Activated CD4-positive, alpha-beta T cell treated with anti-CD3 and anti-CD28 coated beads for 36 hours (primary cell): ENCODE measurements at regions of chr19 and their contacts with region 1.

Region 1: GRCh38 chr19:50933640-50934039 is 19.2 kb downstream of the KLK5 start:
- DNase-seq: no peak
- ATAC-seq: no peak
- H3K4me3 Mint-ChIP-seq: no peak overlapping the region
- H3K27ac Mint-ChIP-seq: no peak overlapping the region
- H3K4me1 Mint-ChIP-seq: no peaks in the 10 kb centered on the region
- H3K27me3 Mint-ChIP-seq: peaks cover 30% of the 10 kb centered on the region

Region 2: DNA sequence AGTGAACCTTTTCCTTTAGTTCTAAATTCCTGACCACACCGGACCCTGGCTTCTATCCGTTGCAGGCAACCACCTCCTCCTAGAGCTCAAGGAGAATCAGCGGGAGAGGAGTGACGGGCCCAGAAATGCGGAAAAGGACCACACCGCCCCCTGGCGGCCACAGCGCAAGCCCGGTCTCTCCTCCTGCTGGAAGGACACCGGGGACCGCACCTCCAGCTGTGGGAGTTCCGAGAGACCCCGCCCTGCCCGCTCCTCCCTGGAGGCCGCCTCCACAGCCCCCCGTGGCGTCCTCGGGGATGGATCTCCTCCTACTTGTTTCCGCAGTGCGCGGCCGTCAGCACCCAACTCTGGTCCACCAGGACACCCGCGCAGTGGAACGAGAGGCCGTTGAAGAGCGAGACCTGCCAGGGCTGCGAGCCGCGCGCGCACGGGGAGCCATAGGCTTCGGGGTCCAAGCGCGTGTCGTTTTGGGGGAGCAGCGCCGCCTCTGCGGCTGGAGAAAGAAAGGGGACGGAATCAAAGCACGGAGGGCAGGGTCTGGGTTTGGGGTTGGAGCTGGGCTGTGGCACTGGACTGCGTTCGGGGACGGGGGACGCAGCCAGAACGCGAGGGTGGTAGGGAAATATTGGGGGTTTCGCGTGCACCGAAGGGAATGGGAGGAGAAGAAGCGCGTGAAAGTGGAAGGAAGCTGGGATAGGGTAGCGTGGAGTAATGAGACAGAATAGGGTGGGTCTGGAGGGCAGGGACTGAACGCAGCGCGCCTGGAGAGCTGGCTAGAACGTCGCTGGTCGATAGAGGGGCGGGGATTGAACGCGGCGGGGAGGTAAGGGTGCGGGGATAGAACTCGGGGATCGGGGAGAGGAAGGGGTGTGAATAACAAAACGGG is 83.4 kb after region 1 on chr19:
- CTCF ChIA-PET with region 1: interaction called, 4 read pairs
- POLR2A ChIA-PET with region 1: no interaction called
- intact Hi-C with region 1: loop called in 1 of 2 experiments (anchors 5 kb)
- DNase-seq: peak; percentile 51
- ATAC-seq: no peak
- H3K4me3 Mint-ChIP-seq: no peak overlapping the region
- H3K27ac Mint-ChIP-seq: no peak overlapping the region
- H3K4me1 Mint-ChIP-seq: peaks cover 18% of the 10 kb centered on the region
- H3K27me3 Mint-ChIP-seq: peaks cover 55% of the 10 kb centered on the region

Region 3: GRCh38 chr19:51097166-51097738 is 163.6 kb after region 1 on chr19:
- CTCF ChIA-PET with region 1: interaction called, 3 read pairs
- POLR2A ChIA-PET with region 1: no interaction called
- intact Hi-C with region 1: loop called (anchors 1 to 2 kb)
- DNase-seq: peak; percentile 87
- ATAC-seq: peak; percentile 67
- H3K4me3 Mint-ChIP-seq: no peak overlapping the region
- H3K27ac Mint-ChIP-seq: no peak overlapping the region
- H3K4me1 Mint-ChIP-seq: peaks cover 20% of the 10 kb centered on the region
- H3K27me3 Mint-ChIP-seq: no peaks in the 10 kb centered on the region

Region 4: DNA sequence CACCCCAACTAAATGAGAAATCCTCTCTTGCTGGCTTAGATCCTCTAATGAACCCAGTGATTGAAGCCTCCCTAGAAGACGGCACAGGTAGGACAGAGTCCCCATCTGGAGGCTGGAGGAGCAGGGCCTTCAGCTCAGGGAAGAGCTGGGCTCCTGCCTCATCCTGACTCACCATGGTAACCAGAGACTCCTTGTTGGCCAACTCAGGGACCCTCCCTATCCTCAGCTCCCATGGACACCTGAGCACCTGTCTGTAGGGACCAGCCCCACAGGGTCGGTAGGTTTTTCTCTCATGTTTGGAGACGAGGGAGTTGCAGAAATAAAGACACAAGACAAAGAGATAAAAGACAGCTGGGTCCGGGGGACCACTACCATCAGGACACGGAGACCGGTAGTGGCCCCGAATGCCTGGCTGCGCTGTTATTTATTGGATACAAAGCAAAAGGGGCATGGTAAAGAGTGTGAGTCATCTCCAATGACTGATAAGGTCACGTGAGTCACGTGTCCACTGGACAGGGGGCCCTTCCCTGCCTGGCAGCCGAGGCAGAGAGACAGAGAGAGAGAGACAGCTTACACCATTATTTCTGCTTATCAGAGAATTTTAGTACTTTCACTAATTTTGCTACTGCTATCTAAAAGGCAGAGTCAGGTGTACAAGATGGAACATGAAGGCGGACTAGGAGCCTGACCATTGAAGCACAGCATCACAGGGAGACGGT is 235.1 kb after region 1 on chr19:
- CTCF ChIA-PET with region 1: no interaction called
- POLR2A ChIA-PET with region 1: no interaction called
- intact Hi-C with region 1: loop called in 1 of 2 experiments (anchors 2 kb)
- DNase-seq: no peak
- ATAC-seq: no peak
- H3K4me3 Mint-ChIP-seq: no peak overlapping the region
- H3K27ac Mint-ChIP-seq: no peak overlapping the region
- H3K4me1 Mint-ChIP-seq: peaks cover 12% of the 10 kb centered on the region
- H3K27me3 Mint-ChIP-seq: peaks cover 3% of the 10 kb centered on the region